MCF 10A (cell line): ENCODE measurements at regions of chr1 and their contacts with region 1.

Region 1: DNA sequence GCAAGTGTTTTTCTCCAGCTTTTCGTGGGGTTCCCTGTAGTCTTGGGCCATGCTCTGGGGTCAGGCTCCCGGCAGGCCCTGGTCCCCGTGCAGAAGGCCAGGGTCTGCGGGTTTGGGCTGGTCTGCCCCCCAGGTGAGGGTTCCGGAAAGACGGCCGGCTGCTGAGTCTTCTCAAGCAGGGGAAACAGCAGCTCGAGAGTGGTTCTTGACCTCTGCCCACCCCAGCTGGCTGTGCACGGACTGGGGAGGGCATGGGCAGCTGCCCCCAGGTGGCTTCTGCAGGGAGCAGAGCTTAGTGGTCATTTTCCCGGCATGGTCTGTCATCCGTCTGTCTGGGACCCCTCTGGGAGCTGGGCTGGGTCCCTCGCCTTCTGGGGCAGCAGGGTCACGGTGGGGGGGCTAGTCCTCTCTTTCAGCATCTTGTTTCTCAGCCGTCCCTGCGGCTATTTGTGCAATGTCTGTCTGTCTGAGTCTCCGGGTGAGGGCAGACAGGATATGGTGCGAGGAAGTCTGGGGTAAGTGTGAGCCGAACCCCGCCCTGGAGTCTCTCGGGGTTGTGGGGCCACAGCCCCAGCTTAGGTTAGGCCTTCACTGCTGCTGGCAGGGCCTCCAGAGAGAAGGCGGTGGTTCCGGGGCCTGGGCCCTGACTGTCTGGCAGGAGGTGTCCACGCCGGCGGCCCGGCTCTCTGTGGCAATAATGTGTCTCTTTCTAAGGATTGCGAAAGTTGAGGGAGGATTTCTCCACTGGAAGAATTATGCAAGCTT is 6.1 kb downstream of the SKI start:
- DNase-seq: peak; percentile 98
- H3K4me3 Mint-ChIP-seq: peak overlapping the region; percentile 63
- H3K27ac Mint-ChIP-seq: peak overlapping the region; percentile 44
- H3K4me1 Mint-ChIP-seq: peaks cover 23% of the 10 kb centered on the region
- H3K27me3 Mint-ChIP-seq: no peaks in the 10 kb centered on the region
- CTCF ChIP-seq: no peak

Region 2: GRCh38 chr1:1990222-1990621 is 244.0 kb before region 1 on chr1:
- CTCF ChIA-PET with region 1: no interaction called
- POLR2A ChIA-PET with region 1: no interaction called
- intact Hi-C with region 1: no loop called
- DNase-seq: no peak
- H3K4me3 Mint-ChIP-seq: no peak overlapping the region
- H3K27ac Mint-ChIP-seq: no peak overlapping the region
- H3K4me1 Mint-ChIP-seq: peaks cover 9% of the 10 kb centered on the region
- H3K27me3 Mint-ChIP-seq: peaks cover 19% of the 10 kb centered on the region
- CTCF ChIP-seq: no peak

Region 3: GRCh38 chr1:2031546-2032540 is 202.3 kb before region 1 on chr1:
- CTCF ChIA-PET with region 1: no interaction called
- POLR2A ChIA-PET with region 1: no interaction called
- intact Hi-C with region 1: no loop called
- DNase-seq: no peak
- H3K4me3 Mint-ChIP-seq: no peak overlapping the region
- H3K27ac Mint-ChIP-seq: no peak overlapping the region
- H3K4me1 Mint-ChIP-seq: no peaks in the 10 kb centered on the region
- H3K27me3 Mint-ChIP-seq: no peaks in the 10 kb centered on the region
- CTCF ChIP-seq: no peak

Region 4: GRCh38 chr1:2194898-2195673 is 39.1 kb before region 1 on chr1:
- CTCF ChIA-PET with region 1: interaction called, 10 read pairs
- POLR2A ChIA-PET with region 1: interaction called, 17 read pairs
- intact Hi-C with region 1: loop called (anchors 1 kb)
- DNase-seq: peak; percentile 87
- H3K4me3 Mint-ChIP-seq: peak overlapping the region; percentile 71
- H3K27ac Mint-ChIP-seq: no peak overlapping the region
- H3K4me1 Mint-ChIP-seq: peaks cover 18% of the 10 kb centered on the region
- H3K27me3 Mint-ChIP-seq: no peaks in the 10 kb centered on the region
- CTCF ChIP-seq: peak; percentile 96

Region 5: GRCh38 chr1:2279210-2279639 is 45.0 kb after region 1 on chr1:
- CTCF ChIA-PET with region 1: no interaction called
- POLR2A ChIA-PET with region 1: no interaction called
- intact Hi-C with region 1: loop called (anchors 5 kb)
- DNase-seq: no peak
- H3K4me3 Mint-ChIP-seq: no peak overlapping the region
- H3K27ac Mint-ChIP-seq: peak overlapping the region; percentile 19
- H3K4me1 Mint-ChIP-seq: peaks cover 19% of the 10 kb centered on the region
- H3K27me3 Mint-ChIP-seq: no peaks in the 10 kb centered on the region
- CTCF ChIP-seq: no peak

Region 6: GRCh38 chr1:2314803-2315673 is 80.9 kb after region 1 on chr1:
- CTCF ChIA-PET with region 1: interaction called, 5 read pairs
- POLR2A ChIA-PET with region 1: interaction called, 5 read pairs
- intact Hi-C with region 1: loop called (anchors 2 kb)
- DNase-seq: no peak
- H3K4me3 Mint-ChIP-seq: peak overlapping the region; percentile 31
- H3K27ac Mint-ChIP-seq: no peak overlapping the region
- H3K4me1 Mint-ChIP-seq: no peaks in the 10 kb centered on the region
- H3K27me3 Mint-ChIP-seq: no peaks in the 10 kb centered on the region
- CTCF ChIP-seq: peak; percentile 98